Calu3 (cell line): ENCODE measurements at regions of chr18 and their contacts with region 1.

Region 1: DNA sequence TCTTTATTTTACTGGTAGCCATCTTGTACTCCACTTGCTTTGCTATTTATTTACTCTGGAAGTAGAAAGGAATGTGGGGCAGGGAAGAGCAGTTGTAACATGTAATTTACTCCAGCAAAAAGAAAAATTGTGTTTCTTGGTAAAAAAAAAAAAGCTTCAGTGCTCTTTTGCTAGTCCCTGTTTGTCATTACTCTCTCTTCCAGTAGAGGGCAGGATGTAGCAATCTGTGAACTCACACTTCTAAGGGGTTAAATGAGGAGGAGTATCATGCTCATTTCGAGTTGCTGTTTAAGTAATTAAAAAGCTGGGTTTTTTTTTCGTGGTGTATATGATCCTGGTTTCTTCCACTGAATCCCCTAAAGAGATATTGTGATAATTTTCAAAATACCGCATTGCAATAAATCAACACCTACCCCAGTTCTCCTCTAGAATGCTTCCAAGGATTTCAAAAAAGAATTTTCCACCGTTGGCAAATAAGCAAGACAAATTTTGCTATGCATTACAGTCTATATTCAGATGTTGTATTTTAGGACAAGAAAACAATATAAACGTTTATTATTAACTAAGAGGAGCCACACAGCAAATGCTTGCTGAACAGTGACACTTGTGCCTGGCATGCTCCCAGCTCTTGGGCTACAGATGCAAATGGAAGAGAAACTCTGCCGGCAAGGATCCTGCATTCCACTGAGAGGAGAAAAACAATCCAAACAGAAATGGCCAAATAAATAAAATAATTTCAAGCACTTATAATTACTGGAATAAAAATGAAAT is 261.6 kb downstream of the ASXL3 start:
- DNase-seq: peak; percentile 38
- H3K4me3 Mint-ChIP-seq: no peak overlapping the region
- H3K27ac Mint-ChIP-seq: no peak overlapping the region
- H3K4me1 Mint-ChIP-seq: peaks cover 9% of the 10 kb centered on the region
- H3K27me3 Mint-ChIP-seq: no peaks in the 10 kb centered on the region
- CTCF ChIP-seq: peak; percentile 80

Region 2: GRCh38 chr18:33870059-33870458 is 30.4 kb after region 1 on chr18:
- CTCF ChIA-PET with region 1: no interaction called
- intact Hi-C with region 1: no loop called
- DNase-seq: no peak
- H3K4me3 Mint-ChIP-seq: no peak overlapping the region
- H3K27ac Mint-ChIP-seq: no peak overlapping the region
- H3K4me1 Mint-ChIP-seq: no peaks in the 10 kb centered on the region
- H3K27me3 Mint-ChIP-seq: no peaks in the 10 kb centered on the region
- CTCF ChIP-seq: no peak

Region 3: GRCh38 chr18:34077599-34077998 is 238.0 kb after region 1 on chr18:
- CTCF ChIA-PET with region 1: no interaction called
- intact Hi-C with region 1: loop called (anchors 5 kb)
- DNase-seq: no peak
- H3K4me3 Mint-ChIP-seq: no peak overlapping the region
- H3K27ac Mint-ChIP-seq: no peak overlapping the region
- H3K4me1 Mint-ChIP-seq: no peaks in the 10 kb centered on the region
- H3K27me3 Mint-ChIP-seq: no peaks in the 10 kb centered on the region
- CTCF ChIP-seq: peak; percentile 23

Region 4: DNA sequence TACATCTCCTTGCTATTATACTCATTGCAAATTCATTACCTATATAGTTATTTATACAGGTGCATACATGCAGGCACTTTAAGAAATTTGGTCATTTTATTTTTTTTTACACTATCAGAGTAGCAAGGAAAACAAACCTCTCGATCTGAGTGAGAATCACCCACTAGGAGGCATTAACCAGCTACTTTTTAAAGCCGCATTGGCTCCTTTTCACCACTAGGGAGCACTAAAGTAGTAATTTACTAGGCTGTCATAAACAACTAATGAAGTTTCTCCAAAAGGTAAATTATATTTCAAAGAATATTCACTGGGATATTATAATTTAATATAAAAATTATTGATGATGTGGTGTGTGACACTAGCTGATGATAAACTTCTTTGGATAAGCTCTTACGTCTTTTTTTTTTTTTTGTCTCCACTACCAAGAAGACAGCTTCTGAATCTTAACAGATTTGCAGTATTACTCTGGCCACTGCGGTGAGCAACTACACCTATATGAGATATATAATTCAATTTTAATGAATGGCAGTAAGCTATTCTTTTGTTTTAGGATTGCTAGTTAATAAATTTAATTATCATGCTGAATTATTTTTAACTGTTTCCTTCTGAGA is 283.2 kb after region 1 on chr18:
- CTCF ChIA-PET with region 1: interaction called, 6 read pairs
- intact Hi-C with region 1: loop called (anchors 1 kb)
- DNase-seq: peak; percentile 30
- H3K4me3 Mint-ChIP-seq: no peak overlapping the region
- H3K27ac Mint-ChIP-seq: no peak overlapping the region
- H3K4me1 Mint-ChIP-seq: peaks cover 29% of the 10 kb centered on the region
- H3K27me3 Mint-ChIP-seq: no peaks in the 10 kb centered on the region
- CTCF ChIP-seq: peak; percentile 90